ENCODE measurements at regions of chr1 and their contacts with region 1.

Region 1: GRCh38 chr1:154241703-154242351 is 21.1 kb downstream of the UBAP2L start:
- DNase-seq: no peak
- ATAC-seq: peak; percentile 67
- H3K4me3 Mint-ChIP-seq: no peak overlapping the region
- H3K27ac Mint-ChIP-seq: peak overlapping the region; percentile 68
- H3K4me1 Mint-ChIP-seq: peaks cover 36% of the 10 kb centered on the region
- H3K27me3 Mint-ChIP-seq: no peaks in the 10 kb centered on the region

Region 2: GRCh38 chr1:154263465-154264332 is 21.9 kb after region 1 on chr1:
- CTCF ChIA-PET with region 1: no interaction called
- POLR2A ChIA-PET with region 1: no interaction called
- intact Hi-C with region 1: loop called (anchors 1 to 2 kb)
- DNase-seq: no peak
- ATAC-seq: no peak
- H3K4me3 Mint-ChIP-seq: no peak overlapping the region
- H3K27ac Mint-ChIP-seq: peak overlapping the region; percentile 87
- H3K4me1 Mint-ChIP-seq: peaks cover 49% of the 10 kb centered on the region
- H3K27me3 Mint-ChIP-seq: no peaks in the 10 kb centered on the region

Region 3: DNA sequence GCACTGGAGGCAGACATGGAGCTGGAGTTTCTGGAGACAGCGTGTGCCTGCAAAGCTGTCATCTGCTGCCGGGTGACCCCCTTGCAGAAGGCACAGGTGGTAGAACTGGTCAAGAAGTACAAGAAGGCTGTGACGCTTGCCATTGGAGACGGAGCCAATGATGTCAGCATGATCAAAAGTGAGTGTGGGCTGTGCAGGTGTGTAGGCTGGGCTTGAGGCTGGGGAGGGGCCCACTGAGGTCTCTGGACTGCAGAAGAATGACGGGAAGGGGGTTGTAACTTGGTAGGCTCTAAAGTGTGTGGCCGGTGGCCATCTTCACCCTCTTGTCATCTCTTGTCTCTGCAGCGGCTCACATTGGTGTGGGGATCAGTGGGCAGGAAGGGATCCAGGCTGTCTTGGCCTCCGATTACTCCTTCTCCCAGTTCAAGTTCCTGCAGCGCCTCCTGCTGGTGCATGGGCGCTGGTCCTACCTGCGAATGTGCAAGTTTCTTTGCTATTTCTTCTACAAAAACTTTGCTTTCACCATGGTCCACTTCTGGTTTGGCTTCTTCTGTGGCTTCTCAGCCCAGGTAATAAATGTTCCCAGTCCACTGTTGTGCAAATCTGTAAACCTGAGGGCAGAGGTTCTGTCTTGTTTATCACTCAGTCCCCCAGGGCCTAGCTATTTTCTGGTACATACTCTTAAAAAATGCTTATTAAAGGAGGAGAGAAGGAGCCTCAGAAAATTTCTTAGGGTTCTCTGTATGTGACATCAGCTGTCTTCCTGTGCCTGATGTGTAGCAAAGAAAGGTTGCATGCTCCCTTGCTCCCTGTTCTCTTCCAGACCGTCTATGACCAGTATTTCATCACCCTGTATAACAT is 103.4 kb after region 1 on chr1:
- CTCF ChIA-PET with region 1: no interaction called
- POLR2A ChIA-PET with region 1: no interaction called
- intact Hi-C with region 1: no loop called
- DNase-seq: peak; percentile 87
- ATAC-seq: peak; percentile 45
- H3K4me3 Mint-ChIP-seq: peak overlapping the region; percentile 37
- H3K27ac Mint-ChIP-seq: peak overlapping the region; percentile 80
- H3K4me1 Mint-ChIP-seq: peaks cover 70% of the 10 kb centered on the region
- H3K27me3 Mint-ChIP-seq: no peaks in the 10 kb centered on the region